ENCODE measurements at regions of chr6 and their contacts with region 1.

Region 1: GRCh38 chr6:31665501-31666336 is at the start of gene CSNK2B:
- DNase-seq: peak; percentile 95
- ATAC-seq: peak; percentile 86
- H3K4me3 Mint-ChIP-seq: peak within 1 kb of the TSS; percentile 96
- H3K27ac Mint-ChIP-seq: peak within 1 kb of the TSS; percentile 98
- H3K4me1 Mint-ChIP-seq: peaks cover 42% of the 10 kb centered on the region
- H3K27me3 Mint-ChIP-seq: no peaks in the 10 kb centered on the region
- total RNA-seq, gene CSNK2B: 206 to 216 TPM

Region 2: GRCh38 chr6:30075161-30075986 is 1590.3 kb before region 1 on chr6 and contains the start of gene RNF39:
- POLR2A ChIA-PET with region 1: no interaction called
- DNase-seq: peak; percentile 58
- ATAC-seq: no peak
- H3K4me3 Mint-ChIP-seq: peak within 1 kb of the TSS; percentile 50
- H3K27ac Mint-ChIP-seq: peak within 1 kb of the TSS; percentile 27
- H3K4me1 Mint-ChIP-seq: peaks cover 34% of the 10 kb centered on the region
- H3K27me3 Mint-ChIP-seq: peaks cover 83% of the 10 kb centered on the region
- total RNA-seq, gene RNF39: not detected

Region 3: DNA sequence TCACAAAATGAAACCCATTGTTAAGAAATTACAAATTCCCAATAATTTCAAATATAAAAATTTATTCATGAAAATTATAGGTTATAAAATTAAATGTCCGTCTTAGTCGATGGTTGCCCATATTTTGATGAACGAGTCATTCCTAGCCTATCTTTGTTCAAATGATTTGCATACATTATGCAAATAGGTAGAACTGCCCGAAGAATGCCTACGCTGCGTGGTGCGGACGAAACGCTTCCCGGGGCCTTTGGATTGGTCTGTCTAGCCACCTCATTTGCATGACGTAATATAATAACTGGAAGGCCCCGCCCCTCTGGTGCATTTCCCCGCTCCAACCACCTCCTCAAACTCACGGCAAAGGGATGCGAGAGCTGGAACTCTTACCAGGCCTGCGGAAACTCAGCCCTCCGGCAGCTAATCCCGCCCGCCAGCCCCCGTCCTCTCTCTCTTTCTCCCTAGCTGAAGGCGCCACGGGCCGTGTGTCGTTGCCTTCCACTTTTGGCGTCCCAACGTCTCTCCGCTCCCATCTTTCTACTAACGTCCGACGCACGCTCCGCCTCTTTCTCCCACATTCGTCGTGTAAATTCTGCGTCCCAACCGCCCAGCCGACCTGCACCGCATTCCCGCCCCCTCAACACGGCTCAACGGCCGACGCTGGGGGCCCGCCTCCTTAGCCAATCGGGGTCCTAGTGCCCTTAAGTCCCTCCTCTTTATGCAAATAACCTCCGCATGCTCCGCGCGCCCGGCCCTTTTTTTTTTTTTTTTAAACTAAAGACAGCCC is 45.7 kb before region 1 on chr6:
- POLR2A ChIA-PET with region 1: interaction called, 14 read pairs
- DNase-seq: peak; percentile 94
- ATAC-seq: peak; percentile 88
- H3K4me3 Mint-ChIP-seq: peak overlapping the region; percentile 91
- H3K27ac Mint-ChIP-seq: peak overlapping the region; percentile 96
- H3K4me1 Mint-ChIP-seq: peaks cover 40% of the 10 kb centered on the region
- H3K27me3 Mint-ChIP-seq: no peaks in the 10 kb centered on the region